ENCODE measurements at regions of chr2 and their contacts with region 1.

Region 1: DNA sequence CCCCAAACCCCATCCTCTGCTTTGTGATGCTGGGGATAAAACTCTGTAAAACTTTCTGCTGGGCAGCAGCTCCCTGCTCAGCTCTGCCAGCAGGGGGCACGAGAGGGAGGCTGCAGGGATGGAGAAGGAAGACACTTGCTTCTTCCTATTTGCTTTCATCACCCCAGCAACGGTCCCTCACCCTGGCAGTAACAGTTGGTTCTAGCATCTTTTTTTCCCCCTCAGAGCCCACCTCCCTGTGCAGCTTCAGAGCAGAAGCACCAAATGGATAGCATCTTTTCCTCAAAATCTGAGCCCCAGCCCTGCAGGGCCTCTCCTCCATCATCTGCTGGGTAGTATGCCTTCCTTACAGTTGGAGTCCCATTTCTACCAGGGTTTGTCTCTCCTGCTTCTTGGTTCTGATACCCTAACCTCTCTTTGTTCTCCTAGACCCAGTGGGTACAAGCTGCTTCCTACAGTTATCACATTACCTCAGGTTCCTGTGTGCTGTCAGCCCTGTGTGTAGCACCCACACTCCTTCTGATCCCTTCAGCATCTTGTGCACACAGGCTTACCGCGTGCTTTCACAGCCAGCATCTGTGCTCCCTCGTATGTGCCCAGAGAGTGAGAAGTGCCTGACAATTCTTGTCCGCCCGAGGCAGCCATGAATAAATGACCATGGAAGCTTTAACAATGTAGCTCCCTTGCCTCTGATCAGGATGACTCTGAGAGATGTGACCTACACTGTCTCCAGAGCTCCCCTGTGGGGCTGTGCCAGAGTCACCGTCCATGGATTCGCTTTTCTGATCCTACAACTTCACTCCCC is 14.5 kb downstream of the CKAP2L start:
- DNase-seq: peak; percentile 79
- CTCF ChIP-seq: peak; percentile 96

Region 2: GRCh38 chr2:112465382-112465781 is 284.6 kb before region 1 on chr2:
- CTCF ChIA-PET with region 1: no interaction called
- POLR2A ChIA-PET with region 1: no interaction called
- DNase-seq: no peak
- CTCF ChIP-seq: no peak

Region 3: DNA sequence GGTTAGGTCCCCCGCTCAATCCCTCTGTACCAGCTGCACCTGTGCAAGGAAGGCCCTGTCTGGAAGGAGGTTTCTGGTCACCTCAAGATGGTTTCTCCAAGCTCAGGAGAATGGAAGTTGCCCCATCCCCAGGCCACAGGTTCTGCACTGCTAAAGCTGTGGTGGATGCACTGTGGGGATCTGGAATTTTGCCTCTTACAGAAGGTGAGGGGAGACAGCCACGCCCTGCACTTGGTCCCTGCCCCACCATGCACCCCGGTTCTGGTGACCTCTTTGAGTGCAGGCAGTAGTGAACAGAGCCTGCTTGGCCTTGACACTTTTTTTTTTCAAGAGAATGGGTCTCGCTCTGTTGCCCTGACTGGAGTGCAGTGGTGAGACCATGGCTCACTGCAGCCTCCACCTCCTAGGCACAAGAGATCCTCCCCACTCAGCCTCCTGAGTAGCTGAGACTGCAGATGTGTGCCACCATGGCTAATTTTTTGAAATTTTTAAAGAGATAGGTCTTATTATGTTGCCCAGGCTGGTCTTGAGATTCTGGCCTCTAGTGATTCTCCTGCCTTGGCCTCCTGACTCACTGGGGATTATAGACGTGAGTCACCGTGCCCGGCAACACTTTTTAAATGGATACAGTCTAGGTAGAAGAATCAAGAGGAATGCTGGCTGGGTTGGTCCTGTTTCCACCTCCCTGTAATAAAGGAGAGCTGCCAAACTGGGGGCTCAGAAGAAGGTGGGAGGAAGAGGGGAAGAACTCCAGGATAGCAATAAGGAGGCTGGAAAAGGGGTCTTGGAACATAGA is 34.9 kb before region 1 on chr2:
- CTCF ChIA-PET with region 1: no interaction called
- POLR2A ChIA-PET with region 1: no interaction called
- DNase-seq: no peak
- CTCF ChIP-seq: no peak

Region 4: DNA sequence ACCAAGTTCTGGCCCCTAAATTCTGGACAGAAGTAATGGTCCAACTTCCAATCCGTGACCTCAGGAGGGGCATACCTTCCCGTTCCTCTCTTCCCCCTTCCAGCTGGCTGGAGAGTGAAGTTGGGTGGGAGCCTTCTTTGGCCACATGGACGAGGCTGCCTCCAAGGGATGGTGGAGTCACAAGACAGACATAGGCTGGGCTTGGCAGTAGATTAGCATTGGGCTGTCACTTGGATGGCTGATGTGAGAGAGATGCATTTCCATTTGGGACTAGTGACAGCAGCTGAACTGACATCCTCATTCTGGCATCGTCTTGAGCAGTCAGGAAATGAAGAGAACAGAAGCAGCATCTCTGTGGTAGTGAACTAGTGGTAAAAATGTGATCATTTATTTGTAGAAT is 16.5 kb before region 1 on chr2:
- CTCF ChIA-PET with region 1: interaction called, 124 read pairs
- POLR2A ChIA-PET with region 1: no interaction called
- DNase-seq: no peak
- CTCF ChIP-seq: no peak

Region 5: DNA sequence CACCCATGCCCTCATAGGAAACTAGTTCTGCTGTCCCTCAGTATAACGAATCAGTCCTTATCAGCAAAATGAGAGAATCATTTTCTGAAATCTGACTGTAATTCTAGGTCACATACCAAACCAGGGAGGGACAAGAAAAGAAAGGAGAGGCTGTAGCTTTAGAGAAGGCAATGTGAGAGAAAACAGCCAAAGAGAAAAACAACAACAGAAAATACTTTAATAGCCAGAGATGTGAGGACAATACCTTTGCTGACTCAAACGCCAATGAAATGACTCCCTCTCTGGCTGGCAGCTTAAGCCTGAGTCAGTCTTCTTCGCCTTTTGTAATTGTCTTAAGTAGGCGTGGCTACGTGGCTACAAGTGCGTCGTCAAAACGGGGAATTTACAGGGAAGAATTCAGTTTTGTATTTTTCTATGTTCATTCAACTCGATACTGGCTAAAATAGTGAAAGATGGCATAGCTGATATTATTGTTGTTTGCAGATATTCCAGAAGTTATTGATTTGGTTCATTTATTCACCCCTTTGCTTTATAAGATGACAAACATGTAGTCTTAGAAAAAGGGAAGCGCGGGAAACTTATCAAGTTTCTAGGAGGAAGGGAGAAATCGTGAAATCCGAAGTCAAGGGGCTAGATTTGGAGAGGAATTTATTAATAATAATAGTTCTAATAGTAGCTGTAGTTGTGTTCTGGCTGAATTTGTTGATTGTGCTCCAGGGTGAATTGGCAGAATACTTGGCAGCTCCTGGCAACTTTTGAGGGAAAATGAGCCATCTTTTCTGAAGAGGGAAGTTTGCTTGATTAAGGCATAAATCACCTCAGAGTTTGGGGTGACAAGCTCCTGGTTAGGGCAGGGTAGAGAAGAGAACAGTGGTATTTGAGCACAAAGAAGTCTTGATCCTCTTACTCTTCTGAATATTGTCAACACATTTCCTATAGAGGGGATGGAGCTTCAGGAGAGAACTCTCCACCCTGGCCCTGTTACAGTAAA is 34.5 kb after region 1 on chr2 and contains the start of gene IL1A:
- CTCF ChIA-PET with region 1: interaction called, 11 read pairs
- POLR2A ChIA-PET with region 1: no interaction called
- DNase-seq: no peak
- CTCF ChIP-seq: no peak

Region 6: DNA sequence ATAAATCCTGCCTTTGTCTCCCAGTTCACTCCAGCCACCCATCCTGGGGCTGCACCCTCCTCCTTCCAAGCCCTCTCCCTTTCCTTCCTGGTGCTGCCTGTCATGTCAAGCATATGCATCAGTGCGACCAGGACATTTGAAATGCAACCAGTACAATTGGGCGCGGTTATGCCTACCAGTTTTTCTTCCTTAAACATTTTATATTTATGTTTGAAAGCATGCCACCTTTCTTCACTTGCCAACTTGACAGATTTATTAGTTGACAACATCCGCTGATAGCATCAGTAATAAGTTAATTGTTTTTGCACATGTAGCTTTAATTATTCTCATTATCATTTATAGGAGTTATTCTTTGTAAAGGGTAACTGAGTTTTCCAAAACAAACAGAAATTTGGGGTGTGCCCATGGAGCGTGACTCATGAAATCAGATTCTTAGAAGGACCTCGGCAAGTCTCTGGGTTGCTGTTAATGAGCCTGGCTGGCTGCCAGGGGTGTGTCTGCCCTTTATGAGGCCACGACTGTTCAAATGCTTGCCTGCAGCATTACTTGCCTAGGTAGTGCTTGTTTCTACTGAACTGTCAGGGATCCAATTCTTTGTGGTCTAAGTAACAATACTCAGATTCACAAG is 119.4 kb after region 1 on chr2:
- CTCF ChIA-PET with region 1: interaction called, 10 read pairs
- POLR2A ChIA-PET with region 1: no interaction called
- DNase-seq: no peak
- CTCF ChIP-seq: no peak

Region 7: GRCh38 chr2:112906276-112906675 is 156.3 kb after region 1 on chr2:
- CTCF ChIA-PET with region 1: interaction called, 18 read pairs
- POLR2A ChIA-PET with region 1: no interaction called
- DNase-seq: no peak
- CTCF ChIP-seq: no peak

Region 8: GRCh38 chr2:112941753-112942658 is 192.0 kb after region 1 on chr2:
- CTCF ChIA-PET with region 1: interaction called, 162 read pairs
- POLR2A ChIA-PET with region 1: no interaction called
- DNase-seq: peak; percentile 76
- CTCF ChIP-seq: peak; percentile 98